Activated CD8-positive, alpha-beta T cell treated with anti-CD3 and anti-CD28 coated beads, Interleukin-2, amount 10 ng/mL, durations not matched to agents 7 days and 5 days (primary cell): ENCODE measurements at regions of chr1 and their contacts with region 1.

Region 1: GRCh38 chr1:201447911-201448871 is 20.8 kb downstream of the PHLDA3 start:
- DNase-seq: peak; percentile 82
- ATAC-seq: peak; percentile 98
- H3K4me3 Mint-ChIP-seq: no peak overlapping the region
- H3K27ac Mint-ChIP-seq: no peak overlapping the region
- H3K4me1 Mint-ChIP-seq: peaks cover 19% of the 10 kb centered on the region
- H3K27me3 Mint-ChIP-seq: peaks cover 11% of the 10 kb centered on the region

Region 2: GRCh38 chr1:201309426-201309825 is 138.8 kb before region 1 on chr1:
- CTCF ChIA-PET with region 1: no interaction called
- POLR2A ChIA-PET with region 1: no interaction called
- DNase-seq: peak; percentile 25
- ATAC-seq: no peak
- H3K4me3 Mint-ChIP-seq: no peak overlapping the region
- H3K27ac Mint-ChIP-seq: no peak overlapping the region
- H3K4me1 Mint-ChIP-seq: peaks cover 13% of the 10 kb centered on the region
- H3K27me3 Mint-ChIP-seq: peaks cover 14% of the 10 kb centered on the region

Region 3: GRCh38 chr1:201334325-201335173 is 113.6 kb before region 1 on chr1:
- CTCF ChIA-PET with region 1: no interaction called
- POLR2A ChIA-PET with region 1: no interaction called
- DNase-seq: no peak
- ATAC-seq: no peak
- H3K4me3 Mint-ChIP-seq: no peak overlapping the region
- H3K27ac Mint-ChIP-seq: no peak overlapping the region
- H3K4me1 Mint-ChIP-seq: no peaks in the 10 kb centered on the region
- H3K27me3 Mint-ChIP-seq: peaks cover 4% of the 10 kb centered on the region

Region 4: GRCh38 chr1:201436393-201436792 is 11.8 kb before region 1 on chr1:
- CTCF ChIA-PET with region 1: interaction called, 45 read pairs
- POLR2A ChIA-PET with region 1: interaction called, 6 read pairs
- DNase-seq: no peak
- ATAC-seq: no peak
- H3K4me3 Mint-ChIP-seq: no peak overlapping the region
- H3K27ac Mint-ChIP-seq: no peak overlapping the region
- H3K4me1 Mint-ChIP-seq: peaks cover 5% of the 10 kb centered on the region
- H3K27me3 Mint-ChIP-seq: peaks cover 23% of the 10 kb centered on the region

Region 5: DNA sequence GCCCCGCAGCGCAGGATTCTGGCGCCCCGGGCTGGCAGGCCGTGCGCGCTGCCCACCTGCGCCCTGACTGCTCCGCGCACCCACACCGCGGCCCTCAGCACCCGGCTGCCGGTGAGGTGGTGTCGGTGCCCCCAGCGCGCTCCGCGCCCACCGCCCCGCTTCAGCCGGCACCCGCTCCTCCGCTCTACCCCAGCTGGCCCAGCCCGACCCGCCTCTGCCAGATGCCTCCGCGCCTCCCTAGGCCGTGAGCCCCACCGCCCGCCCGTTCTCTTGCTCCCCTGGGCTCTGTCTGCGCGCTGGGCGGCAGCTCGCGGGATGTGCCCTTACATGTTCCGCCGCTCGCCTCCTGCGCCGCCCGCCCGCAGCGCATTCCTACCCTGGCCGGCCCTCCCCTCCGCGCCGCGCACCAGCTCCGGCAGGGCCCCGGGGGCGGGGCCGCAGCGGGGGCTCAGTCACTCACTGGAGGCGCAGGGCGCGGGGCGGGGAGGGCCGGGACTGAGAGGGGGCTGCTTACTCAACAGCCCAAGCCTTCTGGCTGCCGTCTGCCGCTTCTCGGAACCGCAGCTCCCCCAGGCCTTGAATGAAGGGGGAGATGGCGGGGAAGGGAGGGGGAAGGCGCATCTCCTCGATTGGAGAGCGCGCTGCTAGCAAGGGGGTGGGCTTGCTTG is 20.8 kb after region 1 on chr1 and contains the start of gene PHLDA3:
- CTCF ChIA-PET with region 1: interaction called, 24 read pairs
- POLR2A ChIA-PET with region 1: no interaction called
- DNase-seq: peak; percentile 72
- ATAC-seq: peak; percentile 86
- H3K4me3 Mint-ChIP-seq: peak within 1 kb of the TSS; percentile 84
- H3K27ac Mint-ChIP-seq: peak within 1 kb of the TSS; percentile 81
- H3K4me1 Mint-ChIP-seq: peaks cover 20% of the 10 kb centered on the region
- H3K27me3 Mint-ChIP-seq: peaks cover 35% of the 10 kb centered on the region
- total RNA-seq, gene PHLDA3: 17.3 to 18.7 TPM

Region 6: DNA sequence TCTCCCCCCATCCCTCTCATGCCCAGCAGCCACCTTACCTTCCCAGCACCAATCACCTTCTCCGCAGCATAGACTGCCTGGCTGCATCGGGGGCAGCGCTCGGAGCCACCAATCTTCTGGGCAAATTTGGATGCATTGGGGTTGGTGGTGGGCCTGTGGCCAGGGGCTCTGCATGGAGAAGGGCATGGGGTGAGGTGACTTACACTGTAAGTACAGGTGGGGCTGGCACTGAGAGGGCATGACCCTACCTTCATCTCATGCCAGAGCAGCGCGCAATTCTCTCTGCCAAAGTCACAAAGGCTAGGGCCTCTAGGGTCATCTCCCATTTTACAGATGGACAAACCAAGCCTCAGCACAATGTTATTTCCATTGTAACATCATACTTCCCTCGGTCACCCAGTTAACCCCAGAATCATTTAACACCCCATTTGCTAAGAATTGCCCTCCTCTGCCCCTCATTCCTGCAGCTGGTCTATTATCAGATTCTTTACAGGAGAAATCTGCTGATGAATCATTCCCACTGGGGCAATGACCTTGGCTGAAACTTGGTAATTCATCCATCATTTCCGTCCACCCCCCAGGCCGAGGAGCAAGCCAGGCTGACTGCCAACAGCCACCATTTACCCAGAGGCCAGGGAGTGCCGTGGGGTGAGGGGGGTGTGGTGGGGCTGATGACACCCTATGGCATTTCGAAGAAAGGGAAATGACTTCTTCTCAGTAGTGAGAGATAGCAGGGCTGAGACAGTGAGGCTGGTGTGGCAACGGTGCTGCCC is 40.8 kb after region 1 on chr1:
- CTCF ChIA-PET with region 1: interaction called, 147 read pairs
- POLR2A ChIA-PET with region 1: no interaction called
- DNase-seq: no peak
- ATAC-seq: no peak
- H3K4me3 Mint-ChIP-seq: no peak overlapping the region
- H3K27ac Mint-ChIP-seq: no peak overlapping the region
- H3K4me1 Mint-ChIP-seq: peaks cover 13% of the 10 kb centered on the region
- H3K27me3 Mint-ChIP-seq: no peaks in the 10 kb centered on the region

Region 7: GRCh38 chr1:201506556-201507359 is 58.6 kb after region 1 on chr1 and contains the start of gene CSRP1:
- CTCF ChIA-PET with region 1: interaction called, 176 read pairs
- POLR2A ChIA-PET with region 1: interaction called, 4 read pairs
- DNase-seq: peak; percentile 89
- ATAC-seq: peak; percentile 96
- H3K4me3 Mint-ChIP-seq: peak within 1 kb of the TSS; percentile 90
- H3K27ac Mint-ChIP-seq: peak within 1 kb of the TSS; percentile 93
- H3K4me1 Mint-ChIP-seq: peaks cover 59% of the 10 kb centered on the region
- H3K27me3 Mint-ChIP-seq: no peaks in the 10 kb centered on the region
- total RNA-seq, gene CSRP1: 78.7 to 80.9 TPM